Body of pancreas (tissue), 4 donors: ENCODE measurements at regions of chr2 and their contacts with region 1.

Region 1: GRCh38 chr2:120520929-120521912 is 175.3 kb downstream of the INHBB start:
- DNase-seq: peak; percentile 65 to 76 (median 74)
- ATAC-seq: peak; percentile 88
- H3K4me3 ChIP-seq: no peak overlapping the region
- H3K27ac ChIP-seq: no peak overlapping the region
- H3K4me1 ChIP-seq: peaks cover 6% of the 10 kb centered on the region
- H3K27me3 ChIP-seq: peaks cover 0 to 5% of the 10 kb centered on the region in 2 donors
- CTCF ChIP-seq: peak; percentile 84 to 95 (median 89)
- POLR2A ChIP-seq: no peak

Region 2: DNA sequence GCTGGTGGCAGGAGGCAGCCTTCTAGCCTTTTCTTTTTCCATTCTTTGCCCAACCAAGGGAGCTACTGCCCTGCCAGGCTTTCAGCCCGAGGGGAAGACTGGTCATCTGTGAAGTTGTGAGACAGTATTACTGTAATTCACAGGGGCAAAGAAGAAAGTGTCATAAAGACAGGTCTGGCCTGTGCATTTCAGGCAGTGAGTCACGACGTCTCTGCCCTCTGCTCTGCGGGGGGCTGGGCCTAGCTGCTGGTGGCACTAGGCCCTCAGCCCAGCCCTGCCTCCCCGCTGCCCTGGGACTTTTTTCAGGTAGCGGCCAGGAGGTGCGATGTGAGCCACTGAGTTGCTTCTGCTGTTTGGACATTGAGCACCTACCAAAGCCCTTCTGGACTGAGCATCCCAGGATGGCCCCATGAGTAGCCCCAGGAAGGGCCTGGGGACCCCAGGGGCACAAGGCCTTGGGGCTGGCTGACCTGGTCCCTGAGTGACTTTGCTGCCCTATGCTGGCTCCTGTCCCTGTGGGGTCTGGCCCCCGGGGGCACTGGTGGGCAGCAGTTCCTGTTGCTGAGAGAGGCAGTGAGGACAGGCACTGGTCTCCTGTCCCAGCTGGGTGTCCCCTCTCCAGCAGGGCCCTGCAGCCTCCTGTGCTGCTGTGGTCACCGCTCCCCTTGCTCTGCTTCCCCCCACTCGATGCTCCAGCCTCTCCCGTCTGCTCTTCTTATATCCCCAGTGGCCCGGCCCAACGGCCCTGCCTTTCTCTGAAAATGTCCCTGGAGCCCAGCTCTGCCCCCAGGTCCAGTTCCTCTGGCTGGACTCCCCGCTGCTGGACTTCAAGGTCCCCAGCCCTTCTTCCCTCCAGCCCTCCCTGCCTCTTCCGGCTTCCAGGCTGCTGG is 168.3 kb before region 1 on chr2:
- intact Hi-C with region 1: loop called (anchors 10 kb)
- DNase-seq: no peak
- ATAC-seq: no peak
- H3K4me3 ChIP-seq: no peak overlapping the region
- H3K27ac ChIP-seq: no peak overlapping the region
- H3K4me1 ChIP-seq: no peaks in the 10 kb centered on the region
- H3K27me3 ChIP-seq: no peaks in the 10 kb centered on the region
- CTCF ChIP-seq: no peak
- POLR2A ChIP-seq: no peak